ENCODE measurements at regions of chr1 and their contacts with region 1.

Region 1: DNA sequence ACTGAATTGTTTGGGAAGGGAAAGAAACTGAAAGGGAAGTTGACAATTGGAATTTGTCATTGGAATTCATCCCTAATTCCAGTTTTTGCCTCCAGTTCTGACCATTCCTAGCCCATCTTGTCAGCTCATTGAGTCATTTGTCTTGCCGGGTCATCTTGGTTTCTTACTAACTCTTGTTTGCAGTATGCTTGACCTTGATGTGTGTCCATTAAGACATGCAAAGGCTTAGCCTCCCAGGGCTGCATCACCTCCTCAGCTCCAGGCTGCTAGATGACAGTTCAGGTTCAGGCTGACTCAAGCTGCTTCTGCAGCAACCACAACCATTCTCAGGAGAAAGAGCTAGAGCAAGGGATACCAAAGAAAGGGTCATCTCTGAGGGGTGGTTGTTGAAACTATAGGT is 151.3 kb upstream of the PTGFR start:
- DNase-seq: peak; percentile 80
- H3K4me3 ChIP-seq: no peak overlapping the region
- H3K27ac ChIP-seq: peak overlapping the region; percentile 86
- H3K4me1 ChIP-seq: peaks cover 18% of the 10 kb centered on the region
- H3K27me3 ChIP-seq: no peaks in the 10 kb centered on the region
- CTCF ChIP-seq: no peak

Region 2: GRCh38 chr1:77925518-77925917 is 414.0 kb before region 1 on chr1:
- CTCF ChIA-PET with region 1: no interaction called
- dilution Hi-C with region 1: no loop called
- in situ Hi-C with region 1: no loop called
- intact Hi-C with region 1: no loop called
- DNase-seq: no peak
- H3K4me3 ChIP-seq: no peak overlapping the region
- H3K27ac ChIP-seq: no peak overlapping the region
- H3K4me1 ChIP-seq: no peaks in the 10 kb centered on the region
- H3K27me3 ChIP-seq: no peaks in the 10 kb centered on the region
- CTCF ChIP-seq: no peak

Region 3: GRCh38 chr1:78168306-78168705 is 171.2 kb before region 1 on chr1:
- CTCF ChIA-PET with region 1: no interaction called
- dilution Hi-C with region 1: no loop called
- in situ Hi-C with region 1: no loop called
- intact Hi-C with region 1: loop called (anchors 5 kb)
- DNase-seq: no peak
- H3K4me3 ChIP-seq: no peak overlapping the region
- H3K27ac ChIP-seq: no peak overlapping the region
- H3K4me1 ChIP-seq: peaks cover 19% of the 10 kb centered on the region
- H3K27me3 ChIP-seq: no peaks in the 10 kb centered on the region
- CTCF ChIP-seq: no peak

Region 4: GRCh38 chr1:78586572-78586971 is 247.1 kb after region 1 on chr1:
- CTCF ChIA-PET with region 1: no interaction called
- dilution Hi-C with region 1: no loop called
- in situ Hi-C with region 1: no loop called
- intact Hi-C with region 1: loop called (anchors 5 kb)
- DNase-seq: peak; percentile 27
- H3K4me3 ChIP-seq: no peak overlapping the region
- H3K27ac ChIP-seq: peak overlapping the region; percentile 17
- H3K4me1 ChIP-seq: peaks cover 23% of the 10 kb centered on the region
- H3K27me3 ChIP-seq: no peaks in the 10 kb centered on the region
- CTCF ChIP-seq: no peak